ENCODE measurements at regions of chr19 and their contacts with region 1.

Region 1: GRCh38 chr19:44653977-44654774 is 10.5 kb downstream of the PVR start:
- DNase-seq: peak; percentile 91
- H3K4me3 Mint-ChIP-seq: no peak overlapping the region
- H3K27ac Mint-ChIP-seq: no peak overlapping the region
- H3K4me1 Mint-ChIP-seq: peaks cover 7% of the 10 kb centered on the region
- H3K27me3 Mint-ChIP-seq: peaks cover 2% of the 10 kb centered on the region

Region 2: DNA sequence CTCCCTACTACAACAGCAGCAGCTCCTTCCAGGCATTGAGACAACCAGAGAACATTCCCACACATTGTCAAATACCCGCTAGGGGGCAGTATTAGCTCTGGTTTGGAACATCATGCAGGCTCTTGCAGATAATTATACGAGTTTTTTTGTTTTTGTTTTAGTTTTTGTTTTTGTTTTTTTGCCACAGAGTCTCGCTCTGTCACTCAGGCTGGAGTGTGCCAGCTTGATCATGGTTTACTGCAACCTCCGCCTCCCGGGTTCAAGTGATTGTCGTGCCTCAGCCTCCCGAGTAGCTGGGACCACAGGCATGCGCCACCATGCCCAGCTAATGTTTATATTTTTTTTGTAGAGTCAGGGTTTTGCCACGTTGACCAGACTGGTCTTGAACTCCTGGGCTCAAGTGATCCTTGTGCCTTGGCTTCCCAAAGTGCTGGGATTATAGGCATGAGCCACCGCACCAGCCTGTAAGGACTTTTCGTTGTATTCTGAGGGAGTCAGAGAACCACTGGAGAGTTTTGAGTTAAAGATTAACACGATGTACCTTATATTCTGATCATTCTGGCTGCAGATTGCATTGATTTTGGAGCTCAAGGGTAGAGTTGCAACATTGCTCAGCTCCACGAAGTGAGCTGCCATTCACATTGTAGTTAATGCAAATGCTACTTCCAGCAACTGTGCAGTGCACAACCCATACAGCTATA is 83.0 kb before region 1 on chr19:
- CTCF ChIA-PET with region 1: interaction called, 33 read pairs
- intact Hi-C with region 1: loop called (anchors 1 kb)
- DNase-seq: peak; percentile 80
- H3K4me3 Mint-ChIP-seq: no peak overlapping the region
- H3K27ac Mint-ChIP-seq: no peak overlapping the region
- H3K4me1 Mint-ChIP-seq: no peaks in the 10 kb centered on the region
- H3K27me3 Mint-ChIP-seq: peaks cover 7% of the 10 kb centered on the region

Region 3: DNA sequence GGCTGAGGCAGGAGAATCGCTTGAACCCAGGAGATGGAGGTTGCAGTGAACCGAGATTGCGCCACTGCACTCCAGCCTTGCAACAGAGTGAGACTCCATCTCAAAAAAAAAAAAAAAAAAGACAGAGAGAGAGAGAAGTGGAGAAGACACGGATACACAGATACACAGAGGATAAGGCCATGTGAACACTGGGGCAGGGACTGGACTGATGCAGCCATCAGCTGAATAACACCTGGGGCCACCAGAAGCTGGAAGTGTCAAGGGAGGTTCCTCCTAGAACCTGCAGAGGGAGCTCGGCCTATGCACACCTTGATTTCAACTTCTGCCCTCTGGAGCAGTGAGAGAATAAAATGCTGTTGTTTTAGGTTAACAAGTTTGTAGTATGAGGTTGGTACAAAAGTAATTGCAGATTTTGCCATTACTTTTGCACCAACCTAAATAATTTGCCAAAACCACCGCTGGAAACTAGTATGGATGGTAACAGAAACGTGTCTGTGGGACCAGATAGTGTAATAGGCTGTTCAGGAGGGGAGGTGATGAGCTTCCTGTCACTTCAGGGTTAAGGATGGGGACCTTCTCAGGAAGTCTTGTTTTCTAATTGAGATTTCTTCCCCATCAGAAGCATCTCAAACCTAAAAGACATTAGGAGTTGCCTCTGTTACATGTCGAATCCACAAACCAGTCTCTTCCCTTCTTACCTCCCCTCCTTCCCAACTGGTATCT is 77.2 kb before region 1 on chr19:
- CTCF ChIA-PET with region 1: interaction called, 33 read pairs
- intact Hi-C with region 1: loop called (anchors 1 kb)
- DNase-seq: peak; percentile 62
- H3K4me3 Mint-ChIP-seq: no peak overlapping the region
- H3K27ac Mint-ChIP-seq: no peak overlapping the region
- H3K4me1 Mint-ChIP-seq: no peaks in the 10 kb centered on the region
- H3K27me3 Mint-ChIP-seq: no peaks in the 10 kb centered on the region

Region 4: DNA sequence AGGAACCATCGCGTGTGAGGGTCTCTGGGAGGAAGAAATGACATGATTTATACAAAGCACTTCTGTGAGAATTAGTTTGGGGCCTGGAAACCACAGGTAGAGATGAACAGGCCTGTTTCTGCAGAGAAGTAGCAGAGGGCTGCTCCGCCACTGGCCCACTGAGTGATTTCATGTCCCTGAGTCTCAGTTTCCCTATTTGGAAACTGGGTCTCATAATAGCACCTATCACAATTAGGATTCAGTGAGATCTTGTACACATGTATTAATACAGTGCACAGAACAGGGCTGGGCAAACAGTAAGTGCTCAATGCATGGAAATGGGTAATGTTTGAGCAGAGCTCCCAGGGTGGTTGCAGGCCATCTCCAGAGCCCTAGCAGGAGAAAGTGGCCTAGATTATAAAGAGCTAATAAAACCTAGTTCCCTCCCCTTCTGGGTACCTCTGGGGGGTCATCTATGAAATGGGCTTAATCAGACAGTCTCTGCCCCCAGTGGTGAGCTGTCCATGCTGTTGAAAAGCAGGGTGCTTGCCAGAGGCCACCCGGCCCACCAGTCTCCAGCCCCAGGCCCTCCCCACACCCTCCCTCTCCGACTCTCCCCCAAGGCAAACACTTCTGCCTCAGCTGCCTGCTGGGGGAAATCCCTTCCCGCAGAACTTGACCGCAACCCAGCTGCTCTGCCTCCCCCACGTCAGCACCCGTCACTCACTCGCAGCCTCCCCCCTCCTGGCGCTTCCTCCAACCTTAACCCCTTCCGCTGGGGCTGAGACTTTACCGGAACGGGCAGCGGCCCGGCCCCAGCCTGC is 98.8 kb after region 1 on chr19:
- CTCF ChIA-PET with region 1: no interaction called
- intact Hi-C with region 1: no loop called
- DNase-seq: peak; percentile 98
- H3K4me3 Mint-ChIP-seq: peak overlapping the region; percentile 93
- H3K27ac Mint-ChIP-seq: peak overlapping the region; percentile 97
- H3K4me1 Mint-ChIP-seq: peaks cover 59% of the 10 kb centered on the region
- H3K27me3 Mint-ChIP-seq: no peaks in the 10 kb centered on the region

Measured in activated naive CD4-positive, alpha-beta T cell treated with anti-CD3 and anti-CD28 coated beads for 36 hours (primary cell).